ENCODE measurements at regions of chr2 and their contacts with region 1.

Region 1: DNA sequence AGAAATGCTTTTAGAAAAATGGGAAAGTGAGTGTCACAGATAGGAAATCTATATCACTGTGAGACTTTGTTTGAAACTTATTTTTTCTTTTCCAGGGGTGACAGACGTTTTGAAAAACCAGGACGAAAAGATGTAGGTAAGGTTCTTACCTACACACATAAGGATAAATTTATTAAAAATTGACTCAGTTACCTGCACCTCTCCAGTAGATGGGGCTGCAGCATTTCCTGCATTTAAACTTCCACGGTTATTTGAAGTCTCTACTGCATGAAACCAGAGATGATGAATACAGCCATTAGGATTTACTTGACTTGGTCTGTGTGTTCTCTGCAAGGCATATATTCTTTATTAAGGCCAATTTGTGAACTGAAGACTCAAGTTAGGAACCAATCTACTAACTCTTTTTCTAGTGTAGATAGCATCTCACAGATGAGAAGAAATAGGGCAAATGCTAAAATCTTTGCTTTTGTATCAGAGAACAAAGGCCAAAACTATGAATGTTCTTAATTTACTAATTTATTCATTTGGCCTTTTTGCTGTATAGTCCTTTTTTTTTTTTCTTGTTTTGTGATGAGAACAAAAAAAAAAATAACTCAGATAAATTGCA is 15.0 kb downstream of the KCNJ13 start:
- DNase-seq: no peak
- ATAC-seq: peak; percentile 68
- H3K4me3 ChIP-seq: no peak overlapping the region
- H3K27ac ChIP-seq: no peak overlapping the region
- H3K4me1 ChIP-seq: peaks cover under 1% of the 10 kb centered on the region; the same call in 1 of the 2 replicates
- H3K27me3 ChIP-seq: no peaks in the 10 kb centered on the region
- CTCF ChIP-seq: peak; percentile 51 to 73 (median 56); a peak in 5 of 6 replicates
- EP300 ChIP-seq: no peak
- POLR2A ChIP-seq: no peak
- RAD21 ChIP-seq: peak; percentile 65

Region 2: GRCh38 chr2:232748038-232748437 is 13.4 kb before region 1 on chr2:
- CTCF ChIA-PET with region 1: interaction called, 6 read pairs
- POLR2A ChIA-PET with region 1: no interaction called
- RAD21 ChIA-PET with region 1: no interaction called
- SMC1A ChIA-PET with region 1: interaction called, 13 read pairs
- in situ Hi-C with region 1: no loop called
- intact Hi-C with region 1: no loop called
- DNase-seq: no peak
- ATAC-seq: no peak
- H3K4me3 ChIP-seq: no peak overlapping the region
- H3K27ac ChIP-seq: 0 out of 2 replicates have a peak overlapping the region, but pooled peaks have one; percentile 18
- H3K4me1 ChIP-seq: peaks cover 4% of the 10 kb centered on the region
- H3K27me3 ChIP-seq: no peaks in the 10 kb centered on the region
- CTCF ChIP-seq: no peak
- EP300 ChIP-seq: no peak
- POLR2A ChIP-seq: no peak
- RAD21 ChIP-seq: no peak

Region 3: GRCh38 chr2:232772531-232772930 is 11.1 kb after region 1 on chr2:
- CTCF ChIA-PET with region 1: interaction called, 13 read pairs
- POLR2A ChIA-PET with region 1: no interaction called
- RAD21 ChIA-PET with region 1: interaction called, 5 read pairs
- SMC1A ChIA-PET with region 1: interaction called, 10 read pairs
- in situ Hi-C with region 1: no loop called
- intact Hi-C with region 1: no loop called
- DNase-seq: peak; percentile 48
- ATAC-seq: peak; percentile 90
- H3K4me3 ChIP-seq: no peak overlapping the region
- H3K27ac ChIP-seq: peak overlapping the region; percentile 40; the same call in 1 of the 2 replicates
- H3K4me1 ChIP-seq: peaks cover 12% of the 10 kb centered on the region
- H3K27me3 ChIP-seq: no peaks in the 10 kb centered on the region
- CTCF ChIP-seq: no peak
- EP300 ChIP-seq: no peak
- POLR2A ChIP-seq: no peak
- RAD21 ChIP-seq: no peak

Region 4: DNA sequence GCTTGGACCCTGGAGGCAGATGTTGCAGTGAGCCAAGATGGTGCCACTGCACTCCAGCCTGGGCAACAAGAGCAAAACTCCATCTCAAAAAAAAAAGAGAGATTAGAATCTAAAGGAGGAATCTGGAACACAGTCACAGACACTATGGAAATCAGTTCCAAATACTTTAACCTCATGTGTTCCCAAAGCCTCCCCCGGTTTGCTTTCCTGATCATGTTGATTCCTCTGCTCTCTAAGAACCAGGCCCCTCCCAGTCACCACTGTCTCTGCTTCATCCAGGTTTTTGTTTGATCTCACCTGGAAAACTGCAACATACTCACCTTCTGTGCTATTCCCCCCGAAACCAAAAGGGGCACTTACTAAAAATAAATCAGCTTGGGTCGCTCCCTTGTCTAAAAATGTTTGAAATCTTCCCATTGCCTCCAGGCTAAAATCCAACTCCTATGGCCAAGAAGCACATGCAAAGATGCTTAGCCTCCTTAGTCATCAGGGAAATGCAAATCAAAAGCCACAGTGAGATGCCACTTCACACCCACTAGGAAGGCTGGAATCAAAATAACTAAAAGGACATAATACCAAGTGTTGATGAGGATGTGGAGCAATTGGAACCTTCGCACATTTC is 264.9 kb after region 1 on chr2:
- CTCF ChIA-PET with region 1: interaction called, 9 read pairs
- POLR2A ChIA-PET with region 1: no interaction called
- RAD21 ChIA-PET with region 1: interaction called, 3 read pairs
- SMC1A ChIA-PET with region 1: interaction called, 7 read pairs
- in situ Hi-C with region 1: no loop called
- intact Hi-C with region 1: loop called (anchors 5 kb)
- DNase-seq: no peak
- ATAC-seq: no peak
- H3K4me3 ChIP-seq: no peak overlapping the region
- H3K27ac ChIP-seq: no peak overlapping the region
- H3K4me1 ChIP-seq: no peaks in the 10 kb centered on the region
- H3K27me3 ChIP-seq: peaks cover 0 to 1% of the 10 kb centered on the region in 2 experiments; a peak in 1 of 4 replicates
- CTCF ChIP-seq: no peak
- EP300 ChIP-seq: no peak
- POLR2A ChIP-seq: no peak
- RAD21 ChIP-seq: no peak

Measured in GM12878 (cell line).